Gastrocnemius medialis (tissue), 4 donors: ENCODE measurements at regions of chr6 and their contacts with region 1.

Region 1: DNA sequence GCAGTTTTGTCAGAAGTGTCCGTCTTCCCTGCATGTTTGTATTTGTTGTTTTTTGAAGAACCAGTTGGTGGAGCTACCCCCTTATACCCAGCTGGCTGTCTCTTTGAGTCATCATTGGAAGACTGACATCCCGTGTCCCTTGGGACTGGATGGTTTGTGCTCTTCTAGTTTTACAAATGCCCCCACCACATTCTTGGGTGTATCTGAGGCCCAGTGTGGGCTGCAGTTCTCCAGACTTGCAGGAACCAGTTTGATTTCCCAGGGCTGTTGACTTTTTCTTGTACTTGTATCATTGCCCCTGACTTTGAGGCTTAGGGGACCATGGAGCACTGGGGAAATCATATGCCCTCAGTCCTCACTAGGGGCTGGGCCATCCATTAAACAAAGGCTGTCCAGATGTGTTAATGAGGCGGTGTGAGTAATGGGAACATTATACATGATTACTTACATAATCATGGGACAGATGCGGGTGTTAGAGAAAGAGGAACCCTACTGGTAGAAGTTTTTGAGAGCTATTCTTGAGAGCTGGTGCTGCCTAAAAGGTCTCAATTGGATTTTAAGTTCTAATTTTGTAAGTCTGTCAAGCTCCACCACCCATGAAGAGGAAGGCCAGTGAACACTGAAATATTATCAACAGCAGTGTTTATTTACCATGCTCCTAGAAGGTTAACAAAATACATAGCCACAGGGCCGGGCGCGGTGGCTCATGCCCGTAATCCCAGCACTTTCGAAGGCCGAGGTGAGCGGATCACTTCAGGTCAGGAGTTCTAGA is 8.4 kb downstream of the JARID2 start:
- DNase-seq: peak in 1 of 2 donors; percentile 42
- ATAC-seq: peak; percentile 51 to 55
- H3K4me3 ChIP-seq: no peak overlapping the region
- H3K27ac ChIP-seq: peak overlapping the region; percentile 89 to 98 (median 95)
- H3K4me1 ChIP-seq: peaks cover 89 to 93% of the 10 kb centered on the region in 2 donors
- H3K27me3 ChIP-seq: no peaks in the 10 kb centered on the region
- CTCF ChIP-seq: peak in 1 of 5 experiments; percentile 22
- POLR2A ChIP-seq: no peak

Region 2: GRCh38 chr6:14559754-14560536 is 694.3 kb before region 1 on chr6:
- in situ Hi-C with region 1: no loop called
- intact Hi-C with region 1: no loop called
- DNase-seq: no peak
- ATAC-seq: no peak
- H3K4me3 ChIP-seq: no peak overlapping the region
- H3K27ac ChIP-seq: no peak overlapping the region
- H3K4me1 ChIP-seq: no peaks in the 10 kb centered on the region
- H3K27me3 ChIP-seq: no peaks in the 10 kb centered on the region
- CTCF ChIP-seq: no peak
- POLR2A ChIP-seq: no peak

Region 3: DNA sequence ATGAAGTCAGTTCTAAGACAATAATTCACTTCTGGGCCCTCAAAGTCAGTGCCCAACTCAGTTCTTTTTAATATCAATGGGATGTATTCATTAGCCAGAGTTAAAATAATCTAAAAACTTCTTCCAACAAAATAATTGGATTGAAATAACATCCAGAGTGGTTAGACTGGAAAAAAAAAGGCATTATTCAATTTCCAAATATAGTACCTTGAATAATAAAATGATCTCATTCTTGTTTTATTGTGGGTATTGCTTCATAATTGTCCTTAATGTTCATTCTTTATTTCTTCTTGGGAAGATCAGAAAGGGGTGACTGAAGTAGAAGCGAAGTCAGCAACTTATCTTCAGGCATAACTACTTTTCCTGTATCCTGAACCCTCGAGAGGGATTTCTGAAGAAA is 93.4 kb before region 1 on chr6:
- in situ Hi-C with region 1: no loop called
- intact Hi-C with region 1: no loop called
- DNase-seq: no peak
- ATAC-seq: no peak
- H3K4me3 ChIP-seq: no peak overlapping the region
- H3K27ac ChIP-seq: no peak overlapping the region
- H3K4me1 ChIP-seq: no peaks in the 10 kb centered on the region
- H3K27me3 ChIP-seq: no peaks in the 10 kb centered on the region
- CTCF ChIP-seq: no peak
- POLR2A ChIP-seq: no peak

Region 4: GRCh38 chr6:15365273-15365687 is 111.0 kb after region 1 on chr6:
- in situ Hi-C with region 1: loop called in 1 of 4 experiments (anchors 25 kb)
- intact Hi-C with region 1: no loop called
- DNase-seq: peak; percentile 71 to 81
- ATAC-seq: peak; percentile 64 to 69
- H3K4me3 ChIP-seq: peak overlapping the region in 3 of 4 donors; percentile 12 to 34 (median 17)
- H3K27ac ChIP-seq: peak overlapping the region; percentile 62 to 73 (median 67)
- H3K4me1 ChIP-seq: peaks cover 80 to 86% of the 10 kb centered on the region in 2 donors
- H3K27me3 ChIP-seq: no peaks in the 10 kb centered on the region
- CTCF ChIP-seq: no peak
- POLR2A ChIP-seq: no peak

Region 5: GRCh38 chr6:15464211-15464725 is 210.0 kb after region 1 on chr6:
- in situ Hi-C with region 1: loop called in 1 of 4 experiments (anchors 25 kb)
- intact Hi-C with region 1: no loop called
- DNase-seq: peak in 1 of 2 donors; percentile 46
- ATAC-seq: peak in 1 of 2 donors; percentile 34
- H3K4me3 ChIP-seq: no peak overlapping the region
- H3K27ac ChIP-seq: no peak overlapping the region
- H3K4me1 ChIP-seq: peaks cover 45 to 49% of the 10 kb centered on the region in 2 donors
- H3K27me3 ChIP-seq: no peaks in the 10 kb centered on the region
- CTCF ChIP-seq: peak; percentile 34 to 74 (median 65)
- POLR2A ChIP-seq: no peak

Region 6: GRCh38 chr6:15491255-15491985 is 237.2 kb after region 1 on chr6:
- in situ Hi-C with region 1: loop called in 2 of 4 experiments (anchors 5 to 25 kb)
- intact Hi-C with region 1: loop called (anchors 5 kb)
- DNase-seq: peak; percentile 59 to 77
- ATAC-seq: peak; percentile 42 to 56
- H3K4me3 ChIP-seq: no peak overlapping the region
- H3K27ac ChIP-seq: peak overlapping the region; percentile 55 to 73 (median 69)
- H3K4me1 ChIP-seq: peaks cover 38 to 45% of the 10 kb centered on the region in 2 donors
- H3K27me3 ChIP-seq: no peaks in the 10 kb centered on the region
- CTCF ChIP-seq: peak; percentile 86 to 94 (median 93)
- POLR2A ChIP-seq: no peak